ENCODE measurements at regions of chr9 and their contacts with region 1.

Region 1: DNA sequence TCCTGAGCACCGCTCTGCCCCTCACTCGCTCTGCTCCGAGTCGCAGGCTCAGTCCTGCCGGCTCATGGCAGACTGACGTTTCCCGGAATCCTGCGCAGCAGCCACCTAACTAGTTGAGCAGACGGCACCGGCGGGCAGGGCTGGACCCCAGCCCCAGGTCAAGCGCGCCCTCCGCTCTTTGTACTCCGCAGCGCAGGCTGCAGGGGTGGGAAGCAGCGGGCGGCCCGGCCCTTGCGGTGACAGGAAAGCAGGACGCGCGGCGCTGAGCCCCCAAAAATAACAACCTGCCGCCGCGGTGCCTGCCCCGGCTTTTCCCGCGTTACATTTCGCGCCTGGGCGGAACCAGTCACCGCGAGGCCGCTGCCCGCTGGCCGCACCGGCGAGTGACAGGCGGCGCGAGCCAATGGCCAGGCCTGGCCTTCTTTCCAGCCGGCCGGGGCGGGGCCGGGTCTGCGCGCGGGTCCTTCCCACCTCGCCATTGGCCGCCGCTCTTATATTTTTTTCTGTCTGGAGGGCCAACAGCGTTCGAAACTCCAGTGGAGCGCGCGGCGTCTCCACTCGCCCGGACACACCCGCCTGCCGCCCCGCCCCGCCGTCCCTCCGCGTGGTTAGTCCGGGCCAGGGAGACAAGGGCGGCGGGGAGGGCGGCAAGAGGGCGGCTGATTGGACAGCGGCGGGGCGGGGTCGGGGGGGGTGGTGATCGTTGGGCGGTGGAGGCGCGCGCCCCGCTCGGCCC is at the start of gene ZNF367:
- DNase-seq: peak; percentile 95
- ATAC-seq: peak; percentile 73
- H3K4me3 ChIP-seq: peak within 1 kb of the TSS; percentile 53 to 100 (median 92)
- H3K4me3 Mint-ChIP-seq: peak within 1 kb of the TSS; percentile 97
- H3K27ac ChIP-seq: peak within 1 kb of the TSS; percentile 91 to 95
- H3K27ac Mint-ChIP-seq: peak within 1 kb of the TSS; percentile 97
- H3K4me1 ChIP-seq: peaks cover 36 to 47% of the 10 kb centered on the region in 2 donors
- H3K4me1 Mint-ChIP-seq: peaks cover 39% of the 10 kb centered on the region
- H3K27me3 ChIP-seq: no peaks in the 10 kb centered on the region
- H3K27me3 Mint-ChIP-seq: no peaks in the 10 kb centered on the region
- CTCF ChIP-seq: no peak
- total RNA-seq, gene ZNF367: 1.7 and 2.2 TPM in 2 replicates

Region 2: GRCh38 chr9:95875305-95876137 is 542.7 kb before region 1 on chr9 and contains the start of gene ERCC6L2:
- CTCF ChIA-PET with region 1: no interaction called
- POLR2A ChIA-PET with region 1: no interaction called
- intact Hi-C with region 1: loop called (anchors 5 kb)
- DNase-seq: peak; percentile 96
- ATAC-seq: peak; percentile 89
- H3K4me3 ChIP-seq: peak within 1 kb of the TSS in 2 of 5 experiments; percentile 76 to 82
- H3K4me3 Mint-ChIP-seq: no peak within 1 kb of the TSS
- H3K27ac ChIP-seq: no peak within 1 kb of the TSS
- H3K27ac Mint-ChIP-seq: no peak within 1 kb of the TSS
- H3K4me1 ChIP-seq: peaks cover 8 to 11% of the 10 kb centered on the region in 2 donors
- H3K4me1 Mint-ChIP-seq: peaks cover 23% of the 10 kb centered on the region
- H3K27me3 ChIP-seq: no peaks in the 10 kb centered on the region
- H3K27me3 Mint-ChIP-seq: no peaks in the 10 kb centered on the region
- CTCF ChIP-seq: no peak
- total RNA-seq, gene ERCC6L2: 52.0 and 54.4 TPM in 2 replicates

Region 3: GRCh38 chr9:96383165-96383942 is 34.9 kb before region 1 on chr9 and contains the start of gene SLC35D2:
- CTCF ChIA-PET with region 1: no interaction called
- POLR2A ChIA-PET with region 1: interaction called, 5 read pairs
- intact Hi-C with region 1: loop called (anchors 5 kb)
- DNase-seq: peak; percentile 22
- ATAC-seq: peak; percentile 74
- H3K4me3 ChIP-seq: peak within 1 kb of the TSS; percentile 21 to 65 (median 52)
- H3K4me3 Mint-ChIP-seq: peak within 1 kb of the TSS; percentile 87
- H3K27ac ChIP-seq: no peak within 1 kb of the TSS
- H3K27ac Mint-ChIP-seq: peak within 1 kb of the TSS; percentile 75
- H3K4me1 ChIP-seq: peaks cover 7 to 10% of the 10 kb centered on the region in 2 donors
- H3K4me1 Mint-ChIP-seq: peaks cover 18% of the 10 kb centered on the region
- H3K27me3 ChIP-seq: peaks cover 0 to 4% (median 0%) of the 10 kb centered on the region in 4 experiments
- H3K27me3 Mint-ChIP-seq: no peaks in the 10 kb centered on the region
- CTCF ChIP-seq: no peak
- total RNA-seq, gene SLC35D2: 13.6 and 16.2 TPM in 2 replicates

Region 4: DNA sequence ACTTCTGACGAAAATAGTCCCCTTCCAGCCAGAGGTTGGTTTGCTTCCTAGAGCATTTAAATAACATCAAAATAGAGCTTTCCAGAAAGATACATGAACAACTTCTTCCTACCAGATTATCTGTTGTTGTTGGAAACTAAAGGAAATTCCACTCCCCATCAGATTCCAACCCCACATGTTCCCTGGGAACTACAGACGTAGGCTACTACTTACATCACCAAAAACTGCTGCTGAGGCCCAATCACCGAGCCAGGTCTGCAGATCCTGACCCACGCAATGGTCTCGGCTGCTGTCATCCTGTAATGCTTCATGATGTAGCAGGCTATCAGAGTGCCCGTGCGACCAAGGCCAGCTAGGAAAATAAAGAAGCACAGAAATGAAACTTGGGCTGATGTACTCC is 105.1 kb after region 1 on chr9:
- CTCF ChIA-PET with region 1: no interaction called
- POLR2A ChIA-PET with region 1: no interaction called
- intact Hi-C with region 1: no loop called
- DNase-seq: no peak
- ATAC-seq: no peak
- H3K4me3 ChIP-seq: no peak overlapping the region
- H3K4me3 Mint-ChIP-seq: no peak overlapping the region
- H3K27ac ChIP-seq: no peak overlapping the region
- H3K27ac Mint-ChIP-seq: no peak overlapping the region
- H3K4me1 ChIP-seq: no peaks in the 10 kb centered on the region
- H3K4me1 Mint-ChIP-seq: no peaks in the 10 kb centered on the region
- H3K27me3 ChIP-seq: no peaks in the 10 kb centered on the region
- H3K27me3 Mint-ChIP-seq: no peaks in the 10 kb centered on the region
- CTCF ChIP-seq: no peak

Region 5: GRCh38 chr9:96566498-96567207 is 148.4 kb after region 1 on chr9:
- CTCF ChIA-PET with region 1: interaction called, 5 read pairs
- POLR2A ChIA-PET with region 1: interaction called, 5 read pairs
- intact Hi-C with region 1: loop called (anchors 1 kb)
- DNase-seq: peak; percentile 89
- ATAC-seq: peak; percentile 91
- H3K4me3 ChIP-seq: peak overlapping the region; percentile 36 to 88 (median 74)
- H3K4me3 Mint-ChIP-seq: peak overlapping the region; percentile 92
- H3K27ac ChIP-seq: peak overlapping the region; percentile 84 to 94
- H3K27ac Mint-ChIP-seq: peak overlapping the region; percentile 92
- H3K4me1 ChIP-seq: peaks cover 11 to 15% of the 10 kb centered on the region in 2 donors
- H3K4me1 Mint-ChIP-seq: peaks cover 18% of the 10 kb centered on the region
- H3K27me3 ChIP-seq: no peaks in the 10 kb centered on the region
- H3K27me3 Mint-ChIP-seq: peaks cover 7% of the 10 kb centered on the region
- CTCF ChIP-seq: peak; percentile 82

Region 6: DNA sequence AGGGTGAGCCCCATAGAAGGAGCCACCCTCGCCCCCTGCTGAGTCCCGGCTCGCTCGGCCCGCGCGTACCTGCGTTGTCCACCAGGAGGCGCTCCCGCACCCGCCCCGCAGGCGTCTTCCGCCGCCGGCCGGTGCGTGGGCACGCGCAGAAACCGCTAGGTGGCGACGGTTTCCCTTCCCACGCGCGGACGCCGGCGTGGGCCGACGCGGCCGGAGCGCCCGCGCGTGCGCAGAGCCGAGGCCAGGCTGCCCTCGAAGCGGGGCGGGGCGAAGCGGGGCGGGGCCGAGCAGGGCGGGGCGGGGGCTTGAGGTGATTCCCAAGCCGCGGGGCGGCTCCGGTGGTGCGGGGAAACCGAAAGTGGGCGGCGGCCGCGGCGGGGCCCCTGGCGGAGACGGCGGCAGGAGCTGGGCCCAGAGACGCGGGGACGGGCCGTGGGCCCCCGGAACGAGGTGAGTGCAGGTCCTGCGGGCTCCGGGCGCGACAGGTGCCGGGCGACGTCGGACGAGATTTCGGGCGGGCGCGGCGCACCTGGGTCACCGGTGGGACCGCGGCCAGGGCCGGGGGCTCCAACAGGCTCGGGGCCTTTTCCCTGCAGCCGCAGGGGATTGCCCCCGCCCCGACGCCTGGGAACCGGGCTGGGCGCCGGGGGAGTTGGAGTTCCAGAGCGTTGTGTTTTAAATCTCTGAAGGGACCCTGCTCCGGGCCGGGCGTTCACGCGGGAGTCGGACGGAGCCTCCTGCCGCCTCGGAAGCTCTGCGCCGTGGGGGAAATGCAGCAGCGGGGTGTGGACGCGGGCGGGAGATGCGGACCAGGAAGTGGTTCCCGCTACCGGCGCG is 993.8 kb after region 1 on chr9 and contains the start of gene TDRD7:
- CTCF ChIA-PET with region 1: no interaction called
- POLR2A ChIA-PET with region 1: no interaction called
- intact Hi-C with region 1: loop called (anchors 10 kb)
- DNase-seq: peak; percentile 96
- ATAC-seq: peak; percentile 91
- H3K4me3 ChIP-seq: peak within 1 kb of the TSS; percentile 57 to 92 (median 85)
- H3K4me3 Mint-ChIP-seq: peak within 1 kb of the TSS; percentile 77
- H3K27ac ChIP-seq: peak within 1 kb of the TSS; percentile 61 to 79
- H3K27ac Mint-ChIP-seq: peak within 1 kb of the TSS; percentile 82
- H3K4me1 ChIP-seq: peaks cover 18% of the 10 kb centered on the region in 2 donors
- H3K4me1 Mint-ChIP-seq: peaks cover 34% of the 10 kb centered on the region
- H3K27me3 ChIP-seq: peaks cover 0 to 3% (median 0%) of the 10 kb centered on the region in 4 experiments
- H3K27me3 Mint-ChIP-seq: peaks cover 10% of the 10 kb centered on the region
- CTCF ChIP-seq: peak; percentile 100
- total RNA-seq, gene TDRD7: 19.7 and 20.6 TPM in 2 replicates

Region 7: DNA sequence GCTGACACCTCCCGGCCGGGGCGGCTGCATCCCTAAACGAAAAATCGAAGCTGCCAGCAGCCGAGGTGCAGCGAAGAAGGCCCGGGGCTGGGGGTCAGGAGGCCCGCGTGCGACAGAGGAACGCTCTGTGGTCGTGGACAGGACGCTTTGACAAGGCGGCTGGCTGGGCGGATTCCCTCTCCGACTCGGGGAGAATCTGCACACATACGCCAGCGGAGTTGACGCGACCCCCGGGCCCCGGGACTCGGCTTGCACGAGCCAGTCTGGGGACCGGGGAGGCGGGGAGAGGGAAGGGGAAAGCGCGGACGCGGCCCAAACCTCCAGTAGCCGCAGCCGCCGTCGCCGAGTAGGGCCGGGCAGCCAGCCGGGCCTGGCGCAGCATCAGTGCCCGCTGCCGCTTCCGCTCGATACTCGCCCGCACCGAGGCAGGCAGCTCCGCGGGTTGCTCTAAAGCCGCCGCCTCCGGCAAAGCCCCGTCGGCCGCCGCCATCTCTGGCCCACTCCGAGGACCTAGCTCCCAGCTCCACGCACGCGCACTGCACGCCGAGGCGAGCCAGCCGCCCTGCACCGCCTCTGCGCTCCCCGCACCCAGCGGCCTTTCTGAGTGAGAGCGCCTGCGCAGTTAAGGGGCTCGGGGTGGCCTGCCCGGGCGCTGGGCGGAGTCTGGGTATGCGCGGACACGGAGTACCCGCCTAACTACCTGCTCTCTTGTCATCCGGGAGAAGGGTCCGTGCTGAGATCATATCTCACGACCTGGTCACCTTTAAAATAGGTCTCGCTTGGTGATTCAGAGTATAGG is 1278.8 kb after region 1 on chr9 and contains the start of gene XPA:
- CTCF ChIA-PET with region 1: no interaction called
- POLR2A ChIA-PET with region 1: no interaction called
- intact Hi-C with region 1: loop called (anchors 5 kb)
- DNase-seq: peak; percentile 97
- ATAC-seq: peak; percentile 92
- H3K4me3 ChIP-seq: peak within 1 kb of the TSS; percentile 67 to 84 (median 74)
- H3K4me3 Mint-ChIP-seq: peak within 1 kb of the TSS; percentile 91
- H3K27ac ChIP-seq: peak within 1 kb of the TSS; percentile 77 to 82
- H3K27ac Mint-ChIP-seq: peak within 1 kb of the TSS; percentile 94
- H3K4me1 ChIP-seq: peaks cover 30 to 40% of the 10 kb centered on the region in 2 donors
- H3K4me1 Mint-ChIP-seq: peaks cover 59% of the 10 kb centered on the region
- H3K27me3 ChIP-seq: no peaks in the 10 kb centered on the region
- H3K27me3 Mint-ChIP-seq: peaks cover 7% of the 10 kb centered on the region
- CTCF ChIP-seq: no peak
- total RNA-seq, gene XPA: 21.3 and 27.4 TPM in 2 replicates

Region 8: DNA sequence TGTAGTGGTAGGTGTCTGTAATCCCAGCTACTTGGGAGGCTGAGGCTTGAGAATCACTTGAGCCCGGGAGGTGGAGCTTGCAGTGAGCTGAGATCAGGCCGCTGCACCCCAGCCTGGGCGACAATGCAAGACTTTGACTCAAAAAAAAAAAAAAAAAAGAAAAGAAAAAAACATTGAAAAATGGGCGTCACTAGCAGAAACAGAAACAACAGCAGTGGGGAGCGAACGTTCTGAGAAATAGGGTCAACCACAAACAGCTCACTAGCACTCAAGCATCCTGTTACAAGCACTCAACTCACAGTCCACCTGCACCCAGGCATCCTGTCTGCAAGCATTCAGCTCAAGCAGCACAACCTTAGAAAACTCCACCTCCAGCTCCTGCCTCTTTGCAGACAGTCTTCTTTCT is 1683.6 kb after region 1 on chr9:
- CTCF ChIA-PET with region 1: no interaction called
- POLR2A ChIA-PET with region 1: no interaction called
- intact Hi-C with region 1: loop called (anchors 10 kb)
- DNase-seq: peak; percentile 91
- ATAC-seq: peak; percentile 98
- H3K4me3 ChIP-seq: peak overlapping the region in 1 of 5 experiments; percentile 38
- H3K4me3 Mint-ChIP-seq: peak overlapping the region; percentile 68
- H3K27ac ChIP-seq: peak overlapping the region; percentile 66 to 74
- H3K27ac Mint-ChIP-seq: peak overlapping the region; percentile 81
- H3K4me1 ChIP-seq: peaks cover 82 to 87% of the 10 kb centered on the region in 2 donors
- H3K4me1 Mint-ChIP-seq: peaks cover 77% of the 10 kb centered on the region
- H3K27me3 ChIP-seq: no peaks in the 10 kb centered on the region
- H3K27me3 Mint-ChIP-seq: no peaks in the 10 kb centered on the region
- CTCF ChIP-seq: no peak

Measured in B cell (primary cell).